Esophagus squamous epithelium (tissue), 5 donors: ENCODE measurements at regions of chr7 and their contacts with region 1.

Region 1: DNA sequence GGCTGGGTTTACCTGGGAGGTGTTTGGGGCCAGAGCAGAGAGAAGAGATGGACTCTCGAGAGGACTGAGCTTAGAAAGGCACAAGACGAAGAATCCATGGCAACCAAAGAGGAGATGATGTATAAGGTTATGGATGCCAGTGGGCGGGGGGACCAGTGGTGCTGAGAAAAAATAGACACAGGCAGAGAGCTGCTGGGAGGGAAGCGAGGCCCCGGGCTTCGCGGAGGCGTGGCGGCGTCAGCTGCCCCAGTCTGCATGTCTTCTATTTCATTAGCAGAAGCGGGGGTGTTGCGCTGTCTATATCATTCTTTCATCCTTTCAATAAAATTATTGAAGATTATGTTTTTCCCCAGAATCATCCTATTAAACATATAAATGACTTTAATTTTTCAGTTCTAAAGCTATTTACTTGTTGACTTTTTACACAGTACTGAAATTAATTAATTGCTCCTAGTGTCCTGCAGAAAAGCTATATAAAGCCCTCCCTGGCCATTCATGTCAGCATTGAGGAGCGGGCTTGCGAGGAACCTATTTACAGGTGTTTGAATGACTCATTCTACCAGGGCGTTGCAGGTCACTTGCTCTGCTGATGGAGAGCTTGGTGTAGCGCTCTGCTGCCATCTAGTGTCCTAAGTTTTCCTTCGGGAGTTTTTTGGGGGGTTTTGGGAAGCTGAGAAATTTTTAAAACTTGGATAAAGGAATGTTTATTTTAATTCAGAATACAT is 42.9 kb upstream of the BHLHA15 start:
- DNase-seq: no peak
- H3K4me3 ChIP-seq: no peak overlapping the region
- H3K27ac ChIP-seq: no peak overlapping the region
- H3K4me1 ChIP-seq: peaks cover 0 to 8% (median 0%) of the 10 kb centered on the region in 3 donors
- H3K27me3 ChIP-seq: no peaks in the 10 kb centered on the region
- CTCF ChIP-seq: peak; percentile 75 to 89 (median 84)
- POLR2A ChIP-seq: no peak

Region 2: DNA sequence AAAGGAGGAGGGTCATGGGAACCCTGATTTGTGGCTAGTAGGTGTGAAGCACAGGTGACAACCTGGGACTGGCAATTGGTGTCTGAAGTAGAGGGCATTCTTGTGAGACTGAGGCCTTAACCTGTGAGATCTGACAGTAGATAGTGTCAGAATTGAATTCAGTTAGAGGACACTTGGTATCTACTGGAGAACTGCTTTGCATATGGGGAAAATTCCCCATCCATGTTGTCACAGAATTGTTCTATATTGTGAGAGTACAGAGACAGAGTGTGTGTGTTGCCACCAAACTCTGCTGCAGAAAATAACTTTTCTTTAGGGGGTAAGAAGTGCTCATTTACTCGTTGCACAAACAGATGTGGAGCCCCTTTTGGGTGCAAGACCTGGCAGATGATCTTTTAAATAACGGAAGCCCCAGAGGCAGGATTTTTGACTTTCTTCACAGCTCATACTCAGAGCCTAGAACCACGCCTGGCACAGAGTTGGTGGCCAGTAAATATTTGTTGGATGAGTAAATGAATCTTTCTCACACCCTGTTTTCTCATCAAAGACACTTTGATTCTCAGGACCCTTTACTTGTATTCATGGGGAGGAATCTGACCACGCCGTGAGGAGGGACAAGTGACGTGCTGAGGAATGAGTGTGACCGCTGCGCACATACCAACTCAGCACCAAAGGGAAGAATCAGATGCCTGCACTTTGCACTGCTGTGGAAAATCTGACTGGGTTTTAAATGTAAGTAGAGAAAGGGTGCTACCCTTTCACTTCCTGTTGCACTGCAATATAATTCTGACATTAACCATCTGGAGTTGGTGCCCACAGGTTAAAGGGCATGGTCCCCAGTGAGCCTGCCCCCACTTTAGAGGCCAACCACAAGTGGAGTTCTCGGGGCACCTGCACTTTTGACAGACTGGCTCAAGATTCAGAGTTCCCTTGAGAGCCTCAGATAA is 1090.0 kb before region 1 on chr7:
- intact Hi-C with region 1: no loop called
- DNase-seq: no peak
- H3K4me3 ChIP-seq: no peak overlapping the region
- H3K27ac ChIP-seq: no peak overlapping the region
- H3K4me1 ChIP-seq: peaks cover 0 to 9% (median 0%) of the 10 kb centered on the region in 3 donors
- H3K27me3 ChIP-seq: peaks cover 0 to 66% (median 0%) of the 10 kb centered on the region in 4 donors
- CTCF ChIP-seq: no peak
- POLR2A ChIP-seq: no peak

Region 3: DNA sequence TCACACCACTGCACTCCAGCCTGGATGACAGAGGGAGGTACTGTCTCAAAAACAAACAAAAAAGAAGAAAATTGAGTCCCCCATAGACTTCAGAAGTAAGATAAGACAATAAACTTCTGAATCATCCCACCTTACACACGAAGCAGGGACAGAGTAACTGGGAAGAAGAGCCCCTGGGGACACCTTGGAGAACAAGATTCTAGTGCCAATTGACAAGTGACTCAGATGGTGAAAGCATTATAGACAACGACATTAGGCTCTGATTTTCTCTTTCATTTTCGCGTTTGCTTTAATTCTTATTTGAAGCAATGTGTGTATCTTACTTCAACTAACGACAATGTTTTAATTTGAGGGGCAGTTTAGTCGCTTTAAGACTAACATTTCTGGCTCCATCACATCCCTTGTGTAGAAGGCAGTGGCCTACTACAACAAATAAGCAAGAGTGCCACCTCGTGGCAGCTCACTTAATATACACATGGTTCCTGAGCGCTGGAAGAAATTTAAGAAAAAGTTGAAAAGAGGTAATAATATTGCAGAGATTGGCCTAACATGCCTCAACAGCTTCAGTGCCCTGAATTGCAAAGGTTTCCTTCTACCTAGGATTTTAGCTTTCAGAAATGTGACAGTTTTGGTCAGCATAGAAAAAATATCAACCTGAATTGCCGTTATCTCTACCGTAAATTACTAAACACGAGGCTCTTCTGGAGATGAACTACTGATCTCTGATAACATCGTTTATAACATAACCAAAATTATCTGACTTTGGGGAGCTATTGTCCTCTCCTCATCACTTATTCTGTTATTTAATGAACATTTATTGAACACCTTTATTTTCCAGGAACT is 332.8 kb before region 1 on chr7:
- intact Hi-C with region 1: no loop called
- DNase-seq: no peak
- H3K4me3 ChIP-seq: no peak overlapping the region
- H3K27ac ChIP-seq: no peak overlapping the region
- H3K4me1 ChIP-seq: no peaks in the 10 kb centered on the region
- H3K27me3 ChIP-seq: peaks cover 0 to 24% (median 0%) of the 10 kb centered on the region in 4 donors
- CTCF ChIP-seq: peak in 5 of 6 experiments; percentile 34 to 57 (median 50)
- POLR2A ChIP-seq: no peak

Region 4: DNA sequence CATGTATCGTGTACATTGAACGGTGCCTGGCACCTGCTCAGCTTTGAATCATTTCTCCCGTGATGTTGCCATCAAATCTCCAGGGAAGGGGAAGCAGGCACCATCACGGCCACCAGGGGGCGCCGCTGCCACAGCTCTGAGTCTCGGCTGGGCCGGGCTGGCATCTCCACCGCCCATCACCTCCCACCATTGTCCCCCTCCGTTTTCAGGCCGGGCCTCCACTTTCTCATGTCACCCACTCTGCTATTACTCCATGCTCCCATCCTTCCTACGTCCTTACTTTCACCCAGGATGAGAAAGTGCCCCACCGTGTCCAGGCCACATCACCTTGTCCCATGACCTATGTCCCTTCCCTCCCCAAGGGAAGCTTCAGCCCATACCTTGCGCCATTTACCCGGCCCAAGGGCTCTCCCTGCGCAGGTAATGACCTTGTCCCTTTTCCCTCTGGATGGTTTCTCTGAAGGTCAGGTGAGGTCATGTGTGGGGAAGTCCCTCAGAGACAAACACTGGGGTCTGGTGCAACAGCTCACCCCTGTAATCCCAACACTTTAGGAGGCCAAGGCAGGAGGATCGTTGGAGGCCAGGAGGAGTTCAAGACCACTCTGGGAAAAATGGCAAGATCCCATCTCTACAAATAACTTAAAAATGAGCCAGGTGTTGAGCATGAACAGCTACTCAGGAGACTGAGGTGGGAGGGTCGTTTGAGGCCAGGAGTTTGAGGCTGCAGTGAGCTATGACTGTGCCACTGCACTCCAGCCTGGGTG is 146.6 kb before region 1 on chr7:
- intact Hi-C with region 1: loop called (anchors 2 kb)
- DNase-seq: no peak
- H3K4me3 ChIP-seq: no peak overlapping the region
- H3K27ac ChIP-seq: no peak overlapping the region
- H3K4me1 ChIP-seq: peaks cover 0 to 5% (median 0%) of the 10 kb centered on the region in 3 donors
- H3K27me3 ChIP-seq: peaks cover 0 to 10% (median 0%) of the 10 kb centered on the region in 4 donors
- CTCF ChIP-seq: peak; percentile 88 to 96 (median 94)
- POLR2A ChIP-seq: no peak

Region 5: GRCh38 chr7:98106647-98107445 is 61.5 kb before region 1 on chr7 and contains the start of gene LMTK2:
- intact Hi-C with region 1: loop called (anchors 5 kb)
- DNase-seq: peak; percentile 56
- H3K4me3 ChIP-seq: peak within 1 kb of the TSS; percentile 84 to 100 (median 92)
- H3K27ac ChIP-seq: peak within 1 kb of the TSS; percentile 90 to 94 (median 93)
- H3K4me1 ChIP-seq: peaks cover 0 to 43% (median 16%) of the 10 kb centered on the region in 3 donors
- H3K27me3 ChIP-seq: no peaks in the 10 kb centered on the region
- CTCF ChIP-seq: peak; percentile 93 to 98 (median 96)
- POLR2A ChIP-seq: peak in 3 of 4 donors; percentile 90 to 94 (median 94)
- total RNA-seq, gene LMTK2: 16.0 to 29.3 (median 20.3) TPM